Psoas muscle (tissue), 8 donors: ENCODE measurements at regions of chr7 and their contacts with region 1.

Region 1: DNA sequence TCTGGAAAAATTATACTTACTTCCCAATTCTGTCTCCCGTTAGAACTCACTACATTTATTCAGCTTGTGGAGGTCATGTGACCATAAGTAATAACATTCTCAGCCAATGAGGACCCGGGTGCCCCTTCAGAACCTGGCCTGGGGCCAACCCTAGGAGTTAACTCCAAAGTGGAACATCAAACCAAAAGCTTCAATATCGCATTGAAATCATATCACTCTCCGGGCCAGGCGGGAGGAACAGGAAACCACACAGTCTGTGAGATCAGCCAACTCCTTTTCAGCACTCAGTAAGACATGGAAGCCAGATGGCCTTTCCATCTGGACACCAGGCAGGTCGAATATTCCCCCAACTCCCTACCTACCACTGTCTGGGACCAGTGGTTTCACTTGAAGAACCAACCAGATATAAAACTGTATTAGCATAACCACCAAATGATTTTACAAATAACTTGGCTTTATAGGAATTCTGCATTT is 5.5 kb downstream of the CREB3L2 start:
- DNase-seq: peak; percentile 57 to 67
- ATAC-seq: peak in 1 of 4 donors; percentile 18
- H3K4me3 ChIP-seq: no peak overlapping the region
- H3K27ac ChIP-seq: no peak overlapping the region
- H3K4me1 ChIP-seq: peaks cover 42% of the 10 kb centered on the region
- H3K27me3 ChIP-seq: no peaks in the 10 kb centered on the region
- CTCF ChIP-seq: no peak

Region 2: GRCh38 chr7:137820677-137821420 is 175.6 kb before region 1 on chr7:
- intact Hi-C with region 1: no loop called
- DNase-seq: peak; percentile 63 to 69
- ATAC-seq: no peak
- H3K4me3 ChIP-seq: no peak overlapping the region
- H3K27ac ChIP-seq: no peak overlapping the region
- H3K4me1 ChIP-seq: no peaks in the 10 kb centered on the region
- H3K27me3 ChIP-seq: no peaks in the 10 kb centered on the region
- CTCF ChIP-seq: no peak

Region 3: DNA sequence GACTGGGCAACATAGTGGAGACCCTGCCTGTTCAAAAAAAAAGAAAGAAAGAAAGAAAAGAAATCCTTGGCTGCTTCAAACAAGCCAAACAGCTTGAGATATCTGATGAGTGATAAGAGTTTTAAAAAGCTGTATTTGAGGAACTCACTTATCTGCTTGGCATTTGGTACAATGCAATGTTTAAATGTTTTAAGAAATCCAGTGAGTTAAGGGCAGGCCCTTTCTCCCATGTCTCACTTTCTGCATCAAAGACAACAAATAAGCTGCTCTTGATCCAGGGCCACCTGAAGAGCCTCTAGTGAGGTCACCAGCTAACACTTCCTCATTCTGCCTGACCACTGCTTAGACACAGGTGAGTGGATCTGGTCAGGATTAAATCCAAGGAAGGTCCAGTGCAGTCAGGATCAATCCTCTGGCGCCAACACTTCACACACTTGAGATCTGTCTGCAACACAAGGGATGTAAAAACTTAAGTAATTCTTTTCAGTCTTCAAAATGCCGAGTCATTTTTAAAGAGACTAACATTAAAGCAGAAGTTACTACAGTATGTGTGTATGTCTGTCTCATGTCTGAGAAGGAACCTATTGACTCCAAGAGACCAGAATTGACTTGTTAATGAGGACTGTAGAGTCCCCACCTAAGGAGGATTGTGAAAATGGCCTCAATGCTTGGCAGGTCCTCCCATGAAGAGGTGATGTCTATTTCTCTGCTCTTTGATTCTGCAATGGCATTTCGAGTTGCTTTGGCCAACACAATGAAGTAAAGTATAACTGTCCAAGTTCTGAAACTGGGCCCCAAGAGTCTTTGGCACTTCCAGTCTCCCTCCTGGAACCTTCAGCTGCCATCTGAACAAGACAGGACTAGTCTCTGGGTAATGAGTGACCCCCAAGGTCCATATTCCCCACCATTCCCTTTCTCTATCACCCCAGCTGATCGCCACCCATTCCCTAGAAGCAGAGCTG is 37.7 kb before region 1 on chr7:
- intact Hi-C with region 1: loop called in 1 of 2 experiments (anchors 5 kb)
- DNase-seq: no peak
- ATAC-seq: no peak
- H3K4me3 ChIP-seq: no peak overlapping the region
- H3K27ac ChIP-seq: no peak overlapping the region
- H3K4me1 ChIP-seq: peaks cover 12% of the 10 kb centered on the region
- H3K27me3 ChIP-seq: no peaks in the 10 kb centered on the region
- CTCF ChIP-seq: no peak